Common myeloid progenitor, CD34-positive (primary cell): ENCODE measurements at regions of chr10 and their contacts with region 1.

Region 1: GRCh38 chr10:116688241-116688711 is 54.1 kb downstream of the HSPA12A start:
- DNase-seq: peak in 2 of 3 donors; percentile 15 to 45
- H3K4me3 ChIP-seq: peak overlapping the region in 1 of 7 experiments; percentile 38
- H3K27ac ChIP-seq: no peak overlapping the region
- H3K4me1 ChIP-seq: peaks cover 0 to 2% (median 0%) of the 10 kb centered on the region in 4 experiments
- H3K27me3 ChIP-seq: peaks cover 0 to 8% (median 4%) of the 10 kb centered on the region in 5 experiments

Region 2: DNA sequence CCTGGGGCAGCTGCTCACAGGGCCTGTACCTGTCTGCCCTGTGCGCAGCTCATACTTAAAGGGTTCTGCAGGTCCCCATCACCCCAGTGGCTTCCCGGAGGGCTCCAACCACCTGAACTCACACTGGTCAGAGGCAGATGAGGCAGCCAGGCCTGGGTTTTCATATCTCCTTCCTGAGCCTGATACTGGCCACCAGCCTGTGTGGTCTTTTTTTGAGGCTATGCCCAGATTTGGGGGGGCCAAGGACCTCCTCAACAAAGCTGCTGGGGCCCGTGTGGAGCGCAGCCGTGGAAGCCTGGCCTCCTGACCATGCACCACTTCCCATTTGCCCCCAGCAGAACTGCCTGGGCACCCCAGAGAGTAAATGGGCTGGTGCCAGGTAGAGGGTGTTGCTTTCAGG is 41.8 kb before region 1 on chr10:
- CTCF ChIA-PET with region 1: no interaction called
- POLR2A ChIA-PET with region 1: no interaction called
- DNase-seq: no peak
- H3K4me3 ChIP-seq: no peak overlapping the region
- H3K27ac ChIP-seq: no peak overlapping the region
- H3K4me1 ChIP-seq: no peaks in the 10 kb centered on the region
- H3K27me3 ChIP-seq: peaks cover 0 to 3% (median 0%) of the 10 kb centered on the region in 5 experiments

Region 3: DNA sequence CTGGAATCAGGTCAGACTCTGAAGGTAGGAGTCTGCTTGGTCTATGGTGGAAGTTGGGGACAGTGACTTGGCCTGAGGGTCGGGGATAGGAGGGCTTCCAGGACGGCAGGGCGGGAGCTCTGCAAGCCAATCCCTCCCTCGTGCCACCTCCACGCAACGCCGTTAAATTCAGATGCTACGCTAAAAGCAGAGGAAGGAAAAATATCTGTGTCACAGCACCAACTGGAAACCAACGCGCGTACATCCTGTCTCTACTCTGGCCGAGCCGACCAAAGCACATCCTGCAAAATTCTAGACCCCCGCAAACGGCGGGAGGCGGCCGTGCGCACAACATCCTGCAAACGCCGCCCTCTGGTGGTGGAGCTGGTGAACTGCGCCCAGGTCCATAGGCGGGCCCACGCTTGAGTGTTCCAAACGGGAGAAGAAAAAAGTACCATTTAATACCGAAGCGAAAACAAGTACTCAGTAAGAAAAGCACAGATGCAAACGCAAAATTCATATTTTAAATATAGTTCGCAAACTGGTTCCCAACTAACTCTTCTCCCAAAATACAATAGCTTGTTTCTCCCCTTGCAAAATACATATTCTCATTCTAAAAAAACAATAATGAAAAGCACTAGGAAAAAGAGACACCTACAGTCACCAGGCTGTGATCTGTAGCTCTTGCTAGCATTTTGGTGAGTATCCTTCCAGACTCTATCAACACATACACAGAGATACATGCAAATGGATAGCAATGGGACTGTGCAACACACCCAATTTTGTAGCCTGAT is 99.8 kb after region 1 on chr10:
- CTCF ChIA-PET with region 1: interaction called, 59 read pairs
- POLR2A ChIA-PET with region 1: no interaction called
- DNase-seq: peak; percentile 83 to 88 (median 87)
- H3K4me3 ChIP-seq: peak overlapping the region in 5 of 7 experiments; percentile 30 to 70 (median 38)
- H3K27ac ChIP-seq: no peak overlapping the region
- H3K4me1 ChIP-seq: peaks cover 0 to 5% (median 2%) of the 10 kb centered on the region in 4 experiments
- H3K27me3 ChIP-seq: peaks cover 0 to 6% (median 0%) of the 10 kb centered on the region in 5 experiments